PC-9 (cell line): ENCODE measurements at regions of chr2 and their contacts with region 1.

Region 1: GRCh38 chr2:189024901-189025618 is 50.9 kb downstream of the COL3A1 start:
- DNase-seq: no peak
- H3K4me3 ChIP-seq: no peak overlapping the region
- H3K27ac ChIP-seq: no peak overlapping the region
- H3K4me1 ChIP-seq: no peaks in the 10 kb centered on the region; the same call in 1 of the 2 replicates
- H3K27me3 ChIP-seq: no peaks in the 10 kb centered on the region
- CTCF ChIP-seq: peak; percentile 24; the same call in 1 of the 2 replicates

Region 2: DNA sequence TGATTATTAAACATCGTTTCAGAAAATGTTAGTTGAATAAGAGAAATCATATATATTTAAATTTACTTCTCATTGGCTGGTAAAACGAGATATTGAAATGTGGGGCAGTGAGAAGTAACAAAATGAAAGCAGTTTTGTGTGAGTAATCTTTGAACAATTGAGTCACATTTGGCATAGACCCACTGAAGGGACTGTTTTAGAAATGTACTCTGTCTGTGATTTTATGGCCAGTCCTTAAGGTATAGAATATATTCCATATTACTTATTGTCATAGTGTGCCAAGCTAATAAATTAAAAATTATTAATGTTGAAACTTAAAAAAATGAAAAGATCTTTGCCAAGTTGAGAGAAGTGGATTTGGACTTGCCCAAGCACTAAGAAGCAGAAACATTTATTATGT is 273.2 kb before region 1 on chr2:
- CTCF ChIA-PET with region 1: no interaction called
- POLR2A ChIA-PET with region 1: no interaction called
- intact Hi-C with region 1: loop called (anchors 5 kb)
- DNase-seq: no peak
- H3K4me3 ChIP-seq: no peak overlapping the region
- H3K27ac ChIP-seq: no peak overlapping the region
- H3K4me1 ChIP-seq: no peaks in the 10 kb centered on the region
- H3K27me3 ChIP-seq: no peaks in the 10 kb centered on the region
- CTCF ChIP-seq: no peak